CD8-positive, alpha-beta T cell (primary cell): ENCODE measurements at regions of chr16 and their contacts with region 1.

Region 1: DNA sequence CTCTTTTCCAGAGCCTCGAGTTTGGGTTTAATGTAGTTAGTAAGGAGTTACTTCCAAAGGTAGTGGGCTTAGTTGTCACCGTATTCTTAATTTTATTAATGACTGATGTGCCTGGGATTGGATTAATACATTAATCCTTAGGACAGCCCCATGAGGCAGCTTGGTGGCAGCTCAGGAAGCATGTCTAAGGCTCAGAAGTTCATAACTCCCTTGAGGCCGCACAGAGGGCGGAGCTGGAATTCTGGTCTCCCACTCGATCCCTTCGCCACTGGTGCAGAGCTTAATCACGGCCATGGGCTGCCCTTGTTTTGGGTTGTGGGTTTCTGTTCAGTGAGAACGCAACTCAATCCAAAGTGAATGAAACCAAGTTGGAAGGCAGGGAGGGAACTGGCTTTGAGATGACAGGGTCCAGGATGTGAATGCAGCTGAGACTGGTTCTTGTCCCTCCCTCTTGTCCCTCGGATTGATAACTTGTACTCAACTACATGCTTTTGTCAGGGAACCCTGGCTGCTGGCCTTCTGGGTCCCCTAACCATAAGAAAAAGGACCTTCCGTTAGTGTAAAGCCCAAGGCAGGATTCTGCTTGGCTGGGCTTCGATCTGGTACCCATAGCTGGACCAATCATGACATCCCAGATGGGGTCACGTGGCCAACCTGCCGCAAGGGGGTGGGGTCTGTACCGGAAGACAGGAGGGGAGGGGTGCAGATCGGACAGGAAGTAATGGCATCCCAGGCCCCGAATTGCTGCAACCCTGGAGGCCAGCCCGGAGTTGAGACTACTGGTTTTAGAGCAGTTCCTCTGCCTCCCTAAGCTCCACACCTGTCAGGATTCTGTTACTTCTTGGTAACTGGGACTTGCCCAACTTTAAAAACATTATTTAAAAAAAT is 45.4 kb downstream of the SNX20 start:
- DNase-seq: peak in 1 of 9 experiments; percentile 33
- ATAC-seq: peak; percentile 36
- H3K4me3 ChIP-seq: no peak overlapping the region
- H3K4me3 Mint-ChIP-seq: no peak overlapping the region
- H3K27ac ChIP-seq: no peak overlapping the region
- H3K27ac Mint-ChIP-seq: no peak overlapping the region
- H3K4me1 ChIP-seq: no peaks in the 10 kb centered on the region
- H3K4me1 Mint-ChIP-seq: peaks cover 2% of the 10 kb centered on the region
- H3K27me3 ChIP-seq: no peaks in the 10 kb centered on the region
- H3K27me3 Mint-ChIP-seq: no peaks in the 10 kb centered on the region
- CTCF ChIP-seq: no peak

Region 2: GRCh38 chr16:50603206-50604064 is 32.3 kb before region 1 on chr16:
- CTCF ChIA-PET with region 1: no interaction called
- POLR2A ChIA-PET with region 1: no interaction called
- intact Hi-C with region 1: no loop called
- DNase-seq: peak in 2 of 9 experiments; percentile 11 to 32
- ATAC-seq: no peak
- H3K4me3 ChIP-seq: no peak overlapping the region
- H3K4me3 Mint-ChIP-seq: peak overlapping the region; percentile 15
- H3K27ac ChIP-seq: no peak overlapping the region
- H3K27ac Mint-ChIP-seq: no peak overlapping the region
- H3K4me1 ChIP-seq: peaks cover 25% of the 10 kb centered on the region
- H3K4me1 Mint-ChIP-seq: peaks cover 30% of the 10 kb centered on the region
- H3K27me3 ChIP-seq: no peaks in the 10 kb centered on the region
- H3K27me3 Mint-ChIP-seq: no peaks in the 10 kb centered on the region
- CTCF ChIP-seq: no peak

Region 3: GRCh38 chr16:50619702-50620491 is 15.9 kb before region 1 on chr16:
- CTCF ChIA-PET with region 1: interaction called, 3 read pairs
- POLR2A ChIA-PET with region 1: no interaction called
- intact Hi-C with region 1: loop called in 1 of 2 experiments (anchors 1 kb)
- DNase-seq: no peak
- ATAC-seq: no peak
- H3K4me3 ChIP-seq: no peak overlapping the region
- H3K4me3 Mint-ChIP-seq: no peak overlapping the region
- H3K27ac ChIP-seq: no peak overlapping the region
- H3K27ac Mint-ChIP-seq: no peak overlapping the region
- H3K4me1 ChIP-seq: peaks cover 27% of the 10 kb centered on the region
- H3K4me1 Mint-ChIP-seq: peaks cover 33% of the 10 kb centered on the region
- H3K27me3 ChIP-seq: no peaks in the 10 kb centered on the region
- H3K27me3 Mint-ChIP-seq: no peaks in the 10 kb centered on the region
- CTCF ChIP-seq: no peak